ENCODE measurements at regions of chr5 and their contacts with region 1.

Region 1: DNA sequence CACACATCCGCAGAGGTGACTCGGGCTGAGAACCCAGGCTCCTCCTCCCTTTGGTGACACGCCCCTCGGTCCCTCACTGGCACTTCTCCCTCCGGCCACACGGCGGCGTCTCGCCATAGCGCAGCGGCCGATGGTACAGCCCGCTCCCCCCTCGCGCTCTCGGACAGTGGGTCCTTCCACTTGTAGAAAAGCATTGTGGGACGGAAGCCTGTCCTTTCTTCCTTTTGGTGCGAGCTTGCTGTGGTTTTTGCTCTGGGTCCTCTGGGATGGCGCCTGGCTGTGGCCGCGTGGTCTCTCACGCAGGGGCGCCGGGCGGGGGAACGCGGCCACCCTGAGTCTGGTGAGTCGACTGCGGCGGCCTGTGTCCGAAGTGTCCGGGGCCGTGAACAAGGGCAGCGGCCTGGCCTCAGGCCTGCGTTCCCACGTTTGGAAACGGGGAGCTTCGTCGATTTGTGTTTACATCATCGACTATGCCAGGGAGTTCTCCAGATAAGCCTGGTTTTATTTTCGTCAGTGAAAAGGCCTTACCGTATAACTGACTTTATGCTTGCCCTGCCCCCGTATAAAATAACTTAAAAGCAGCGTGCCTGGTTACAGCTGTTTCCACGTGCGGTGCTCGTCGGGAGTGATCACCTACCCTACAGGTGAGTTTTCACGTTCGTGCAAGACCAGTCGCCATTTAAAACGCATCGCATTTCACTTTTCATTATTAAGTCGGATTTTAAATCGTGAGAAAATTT is 258.3 kb downstream of the EPB41L4A start:
- DNase-seq: peak; percentile 90
- H3K4me3 Mint-ChIP-seq: peak overlapping the region; percentile 95
- H3K27ac Mint-ChIP-seq: peak overlapping the region; percentile 92
- H3K4me1 Mint-ChIP-seq: peaks cover 24% of the 10 kb centered on the region
- H3K27me3 Mint-ChIP-seq: no peaks in the 10 kb centered on the region
- CTCF ChIP-seq: peak; percentile 97

Region 2: GRCh38 chr5:112186401-112186990 is 25.7 kb after region 1 on chr5:
- CTCF ChIA-PET with region 1: interaction called, 3 read pairs
- POLR2A ChIA-PET with region 1: interaction called, 14 read pairs
- intact Hi-C with region 1: no loop called
- DNase-seq: peak; percentile 56
- H3K4me3 Mint-ChIP-seq: no peak overlapping the region
- H3K27ac Mint-ChIP-seq: no peak overlapping the region
- H3K4me1 Mint-ChIP-seq: peaks cover 10% of the 10 kb centered on the region
- H3K27me3 Mint-ChIP-seq: no peaks in the 10 kb centered on the region
- CTCF ChIP-seq: peak; percentile 48